Activated CD4-positive, alpha-beta memory T cell treated with anti-CD3 and anti-CD28 coated beads for 36 hours (primary cell): ENCODE measurements at regions of chr3 and their contacts with region 1.

Region 1: DNA sequence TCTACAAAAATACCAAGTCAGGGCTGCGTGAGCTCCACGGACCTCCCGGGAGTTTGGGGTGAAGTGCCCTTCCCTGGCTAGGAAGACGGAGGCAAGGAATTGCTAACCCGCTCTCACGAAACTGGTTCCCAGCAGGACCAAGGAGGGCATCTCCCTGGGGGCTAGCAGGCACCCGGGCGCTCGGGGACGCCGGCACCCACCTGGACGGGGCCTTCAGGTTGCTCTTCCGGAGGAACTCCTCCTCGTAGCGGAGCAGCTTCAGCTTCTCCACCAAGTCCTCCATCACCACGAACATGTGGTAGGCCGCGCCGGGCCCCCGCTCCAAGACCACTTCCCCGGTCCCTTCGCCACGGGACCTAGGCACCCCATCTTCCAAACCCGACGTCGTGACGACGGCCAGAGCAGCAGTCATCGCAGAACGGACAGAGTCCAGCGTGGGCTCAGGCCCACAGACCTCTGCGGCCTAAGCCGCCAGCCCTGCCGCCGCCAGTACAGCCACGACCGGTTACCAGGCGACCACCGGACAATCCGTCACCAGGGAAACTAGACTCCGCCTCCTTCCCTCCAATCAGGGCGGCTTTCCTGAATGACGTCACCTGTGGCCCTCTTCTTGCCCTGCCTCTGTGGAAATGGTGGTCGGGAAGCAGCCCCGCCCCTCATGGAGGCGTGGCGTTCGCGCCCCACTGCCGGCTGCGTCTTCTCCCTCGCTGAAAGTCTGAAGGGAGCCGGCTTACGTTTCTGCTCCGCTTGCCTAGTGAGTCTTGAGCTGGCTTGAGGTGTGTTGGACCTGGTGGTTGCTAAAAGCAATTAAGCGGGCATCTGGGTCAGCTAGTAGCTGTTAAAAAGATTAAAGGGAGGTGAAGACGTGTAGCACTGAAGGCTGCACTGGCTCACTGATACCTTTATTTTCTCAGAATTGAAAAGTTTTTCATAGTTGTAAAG is at the start of gene IFT57:
- DNase-seq: peak; percentile 96
- H3K4me3 Mint-ChIP-seq: peak within 1 kb of the TSS; percentile 96
- H3K27ac Mint-ChIP-seq: peak within 1 kb of the TSS; percentile 96
- H3K4me1 Mint-ChIP-seq: peaks cover 47% of the 10 kb centered on the region
- H3K27me3 Mint-ChIP-seq: no peaks in the 10 kb centered on the region
- total RNA-seq, gene IFT57: 29.4 to 29.6 TPM

Region 2: DNA sequence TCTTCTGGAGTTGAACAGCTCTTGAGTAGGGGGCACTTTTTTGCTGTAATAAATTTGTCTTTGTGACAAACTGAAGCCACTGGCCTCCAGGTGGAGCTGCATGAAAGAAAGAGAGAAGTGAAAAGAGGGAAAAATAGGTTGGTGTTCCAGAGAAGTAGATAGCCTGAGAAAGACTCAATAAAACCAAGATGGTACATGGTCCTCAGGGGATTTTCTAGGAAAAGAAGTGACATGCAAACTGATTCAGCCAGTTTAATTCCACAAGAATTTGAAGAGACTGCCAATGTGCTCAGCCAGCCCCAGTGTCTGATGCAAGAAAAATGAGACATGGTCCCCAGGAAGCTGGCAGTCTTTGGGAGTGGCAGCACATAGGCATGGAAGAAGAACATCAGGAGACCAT is 284.0 kb before region 1 on chr3:
- CTCF ChIA-PET with region 1: no interaction called
- POLR2A ChIA-PET with region 1: no interaction called
- intact Hi-C with region 1: loop called (anchors 5 kb)
- DNase-seq: peak; percentile 20
- H3K4me3 Mint-ChIP-seq: no peak overlapping the region
- H3K27ac Mint-ChIP-seq: no peak overlapping the region
- H3K4me1 Mint-ChIP-seq: peaks cover 18% of the 10 kb centered on the region
- H3K27me3 Mint-ChIP-seq: no peaks in the 10 kb centered on the region

Region 3: DNA sequence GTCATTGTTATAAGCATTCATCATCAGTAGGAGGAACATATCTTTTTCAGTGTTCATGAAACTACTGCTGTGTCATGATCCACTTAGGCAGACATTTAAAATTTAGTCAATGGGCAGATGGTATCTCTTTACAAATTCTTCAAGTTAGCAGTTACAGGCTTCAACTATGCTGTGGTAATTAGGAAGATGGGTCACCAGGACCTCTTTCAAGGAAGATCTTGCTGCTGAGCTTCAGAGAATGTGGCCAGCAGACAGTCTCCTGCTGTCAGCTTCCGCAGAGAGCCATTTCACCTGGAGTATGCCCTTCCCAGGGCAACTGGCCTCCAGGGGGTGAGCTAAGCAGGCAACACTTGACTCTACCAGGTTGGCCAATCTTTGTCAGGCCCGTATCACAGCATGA is 19.3 kb before region 1 on chr3:
- CTCF ChIA-PET with region 1: interaction called, 3 read pairs
- POLR2A ChIA-PET with region 1: interaction called, 4 read pairs
- intact Hi-C with region 1: loop called (anchors 1 kb)
- DNase-seq: no peak
- H3K4me3 Mint-ChIP-seq: no peak overlapping the region
- H3K27ac Mint-ChIP-seq: no peak overlapping the region
- H3K4me1 Mint-ChIP-seq: peaks cover 32% of the 10 kb centered on the region
- H3K27me3 Mint-ChIP-seq: no peaks in the 10 kb centered on the region

Region 4: GRCh38 chr3:108388136-108389132 is 166.3 kb after region 1 on chr3:
- CTCF ChIA-PET with region 1: no interaction called
- POLR2A ChIA-PET with region 1: no interaction called
- intact Hi-C with region 1: loop called (anchors 1 kb)
- DNase-seq: peak; percentile 25
- H3K4me3 Mint-ChIP-seq: no peak overlapping the region
- H3K27ac Mint-ChIP-seq: no peak overlapping the region
- H3K4me1 Mint-ChIP-seq: peaks cover 19% of the 10 kb centered on the region
- H3K27me3 Mint-ChIP-seq: peaks cover 16% of the 10 kb centered on the region

Region 5: DNA sequence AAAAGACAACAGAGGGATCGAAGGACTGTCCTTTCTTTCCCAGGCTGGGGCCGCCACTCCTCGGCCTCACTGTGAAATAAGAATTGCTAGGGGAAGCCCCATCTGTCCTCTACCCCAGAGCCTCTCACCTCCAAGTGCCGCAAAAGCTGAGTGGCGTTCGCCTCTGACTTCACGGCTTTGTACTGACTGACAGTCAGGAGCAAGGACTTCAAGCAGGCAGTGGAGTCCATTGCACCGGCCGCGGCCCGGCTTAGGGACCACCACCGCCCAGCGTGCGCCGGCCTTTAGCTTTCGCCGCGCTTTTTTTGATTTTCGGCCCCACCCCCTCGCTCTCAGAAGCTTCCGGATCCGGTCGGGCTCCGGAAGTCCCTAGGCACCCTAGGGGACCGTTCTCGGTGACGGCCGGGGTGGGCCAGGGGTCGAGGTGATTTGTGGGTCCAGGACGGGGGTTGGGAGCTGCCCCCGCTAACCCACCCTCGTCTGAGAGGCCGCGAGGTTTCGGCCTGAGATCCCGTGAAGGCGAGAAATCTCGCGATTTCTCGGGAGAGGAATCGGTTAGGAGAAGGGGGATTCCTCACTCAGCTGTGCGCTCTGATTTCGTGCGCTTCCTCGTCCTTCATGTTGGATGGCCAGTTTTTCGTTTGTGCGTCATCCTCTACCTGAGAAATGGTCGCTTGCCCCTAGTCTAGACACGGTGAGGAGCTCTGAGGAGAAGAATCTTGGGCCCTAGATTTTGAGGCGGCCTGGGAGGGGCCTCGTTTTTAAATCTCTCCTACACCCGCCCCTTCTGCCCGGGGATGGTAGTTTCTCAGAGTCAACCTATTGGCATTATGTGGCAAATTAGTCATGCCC is 367.2 kb after region 1 on chr3 and contains the starts of genes CIP2A and DZIP3:
- CTCF ChIA-PET with region 1: no interaction called
- POLR2A ChIA-PET with region 1: interaction called, 3 read pairs
- intact Hi-C with region 1: loop called (anchors 5 kb)
- DNase-seq: peak; percentile 90
- H3K4me3 Mint-ChIP-seq: peak within 1 kb of the TSS; percentile 99
- H3K27ac Mint-ChIP-seq: peak within 1 kb of the TSS; percentile 99
- H3K4me1 Mint-ChIP-seq: peaks cover 29% of the 10 kb centered on the region
- H3K27me3 Mint-ChIP-seq: no peaks in the 10 kb centered on the region
- total RNA-seq, gene CIP2A: 39.5 to 45.1 TPM
- total RNA-seq, gene DZIP3: 11.3 to 11.4 TPM